Mammary epithelial cell (primary cell): ENCODE measurements at regions of chr18 and their contacts with region 1.

Region 1: DNA sequence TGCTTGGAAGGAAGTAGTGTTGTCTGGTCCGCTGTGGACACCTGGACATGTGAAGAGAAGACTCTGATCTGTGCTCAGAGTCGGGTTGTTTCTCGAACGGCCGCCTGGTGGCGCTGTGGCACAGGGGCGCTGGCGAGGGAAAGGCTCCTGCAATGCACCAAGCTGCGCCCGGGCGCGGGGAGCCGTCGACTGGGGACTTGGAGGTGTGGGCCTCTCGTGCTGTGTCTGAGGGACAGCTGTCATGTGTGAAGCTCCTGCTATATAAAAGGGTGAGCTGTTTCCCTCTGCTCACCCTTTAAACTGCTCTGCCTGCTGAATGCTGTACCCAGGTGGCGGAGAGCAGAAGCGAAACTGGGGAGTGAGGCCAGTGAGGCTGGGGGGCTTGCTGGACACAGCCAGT is 44.0 kb downstream of the GNAL start:
- DNase-seq: peak; percentile 63
- H3K4me3 ChIP-seq: peak overlapping the region in 1 of 3 experiments; percentile 16
- H3K27ac ChIP-seq: no peak overlapping the region
- H3K4me1 ChIP-seq: peaks cover 12% of the 10 kb centered on the region
- H3K27me3 ChIP-seq: no peaks in the 10 kb centered on the region
- CTCF ChIP-seq: peak; percentile 87 to 96

Region 2: GRCh38 chr18:11454021-11454420 is 279.0 kb before region 1 on chr18:
- CTCF ChIA-PET with region 1: no interaction called
- dilution Hi-C with region 1: no loop called
- in situ Hi-C with region 1: no loop called
- intact Hi-C with region 1: no loop called
- DNase-seq: no peak
- H3K4me3 ChIP-seq: no peak overlapping the region
- H3K27ac ChIP-seq: no peak overlapping the region
- H3K4me1 ChIP-seq: no peaks in the 10 kb centered on the region
- H3K27me3 ChIP-seq: no peaks in the 10 kb centered on the region
- CTCF ChIP-seq: no peak

Region 3: DNA sequence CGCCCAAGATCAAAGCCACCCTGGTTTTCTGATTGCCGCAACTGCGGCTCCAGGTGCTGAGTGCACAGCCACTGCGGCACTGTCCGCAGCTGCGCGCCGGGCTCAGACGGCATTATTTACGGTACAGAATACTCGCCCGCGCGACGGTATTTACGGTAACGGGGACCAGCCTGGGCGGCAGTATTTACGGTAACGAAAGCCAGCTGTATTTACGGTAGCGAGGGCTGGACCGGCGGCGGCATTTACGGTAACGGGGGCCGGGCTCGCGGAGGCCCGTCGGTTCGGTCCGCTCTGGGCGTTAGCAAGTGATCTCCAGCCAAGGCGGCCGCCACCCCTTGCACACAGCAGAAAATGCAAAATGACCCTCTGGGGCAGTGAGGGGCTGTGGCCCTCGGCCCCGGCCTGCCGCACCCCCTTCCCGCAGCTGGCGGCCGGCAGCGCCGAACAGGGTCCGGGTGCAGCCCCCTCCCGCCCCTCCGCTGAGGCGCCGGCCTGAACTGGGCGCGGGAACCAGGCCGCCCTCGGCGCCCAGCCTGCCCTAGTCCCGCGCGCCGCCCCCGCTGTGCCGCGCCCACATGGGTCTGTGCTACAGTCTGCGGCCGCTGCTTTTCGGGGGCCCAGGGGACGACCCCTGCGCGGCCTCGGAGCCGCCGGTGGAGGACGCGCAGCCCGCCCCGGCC is 43.9 kb before region 1 on chr18 and contains the start of gene GNAL:
- CTCF ChIA-PET with region 1: no interaction called
- dilution Hi-C with region 1: no loop called
- in situ Hi-C with region 1: no loop called
- intact Hi-C with region 1: loop called (anchors 1 kb)
- DNase-seq: peak; percentile 80
- H3K4me3 ChIP-seq: peak within 1 kb of the TSS; percentile 54 to 90 (median 81)
- H3K27ac ChIP-seq: peak within 1 kb of the TSS; percentile 2
- H3K4me1 ChIP-seq: peaks cover 4% of the 10 kb centered on the region
- H3K27me3 ChIP-seq: no peaks in the 10 kb centered on the region
- CTCF ChIP-seq: no peak
- total RNA-seq, gene GNAL: 35.0 to 40.8 TPM

Region 4: DNA sequence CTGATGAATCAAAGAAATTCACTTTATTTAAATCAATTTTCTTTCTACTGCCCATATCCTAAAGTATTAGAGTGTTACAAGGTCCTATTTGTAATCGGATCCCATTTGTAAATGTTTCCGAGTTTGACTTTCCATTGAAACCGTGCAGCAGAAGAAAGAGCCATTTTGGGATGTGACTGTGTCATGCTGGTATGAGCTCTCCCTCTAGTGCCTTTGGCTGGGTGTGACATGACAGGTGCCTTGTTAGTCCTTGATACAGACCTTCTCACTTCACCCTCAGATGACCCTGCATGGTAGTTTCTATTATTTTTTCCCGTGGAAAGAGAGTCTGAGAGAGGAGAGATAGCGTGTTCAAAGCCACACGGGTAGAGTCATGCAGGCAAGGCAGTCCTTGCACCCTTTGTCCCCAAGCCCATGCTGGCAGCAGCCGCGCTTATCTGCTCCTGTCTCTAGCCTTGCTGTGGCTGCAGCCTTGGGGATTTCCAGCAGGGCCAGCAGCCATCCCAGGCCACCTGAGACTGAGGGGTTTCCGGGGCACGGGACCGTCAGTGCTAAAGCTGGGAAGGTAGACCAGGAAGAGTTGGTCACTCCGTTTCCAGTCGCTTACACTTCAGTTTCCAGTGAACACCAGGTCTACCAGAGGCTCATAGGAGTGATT is 139.6 kb after region 1 on chr18:
- CTCF ChIA-PET with region 1: no interaction called
- dilution Hi-C with region 1: no loop called
- in situ Hi-C with region 1: loop called in 1 of 2 experiments (anchors 10 kb)
- intact Hi-C with region 1: loop called (anchors 1 kb)
- DNase-seq: no peak
- H3K4me3 ChIP-seq: no peak overlapping the region
- H3K27ac ChIP-seq: no peak overlapping the region
- H3K4me1 ChIP-seq: no peaks in the 10 kb centered on the region
- H3K27me3 ChIP-seq: no peaks in the 10 kb centered on the region
- CTCF ChIP-seq: peak; percentile 14 to 58

Region 5: GRCh38 chr18:11937874-11938478 is 204.9 kb after region 1 on chr18:
- CTCF ChIA-PET with region 1: no interaction called
- dilution Hi-C with region 1: no loop called
- in situ Hi-C with region 1: no loop called
- intact Hi-C with region 1: loop called (anchors 5 kb)
- DNase-seq: peak; percentile 47
- H3K4me3 ChIP-seq: no peak overlapping the region
- H3K27ac ChIP-seq: no peak overlapping the region
- H3K4me1 ChIP-seq: no peaks in the 10 kb centered on the region
- H3K27me3 ChIP-seq: no peaks in the 10 kb centered on the region
- CTCF ChIP-seq: peak; percentile 70 to 83

Region 6: DNA sequence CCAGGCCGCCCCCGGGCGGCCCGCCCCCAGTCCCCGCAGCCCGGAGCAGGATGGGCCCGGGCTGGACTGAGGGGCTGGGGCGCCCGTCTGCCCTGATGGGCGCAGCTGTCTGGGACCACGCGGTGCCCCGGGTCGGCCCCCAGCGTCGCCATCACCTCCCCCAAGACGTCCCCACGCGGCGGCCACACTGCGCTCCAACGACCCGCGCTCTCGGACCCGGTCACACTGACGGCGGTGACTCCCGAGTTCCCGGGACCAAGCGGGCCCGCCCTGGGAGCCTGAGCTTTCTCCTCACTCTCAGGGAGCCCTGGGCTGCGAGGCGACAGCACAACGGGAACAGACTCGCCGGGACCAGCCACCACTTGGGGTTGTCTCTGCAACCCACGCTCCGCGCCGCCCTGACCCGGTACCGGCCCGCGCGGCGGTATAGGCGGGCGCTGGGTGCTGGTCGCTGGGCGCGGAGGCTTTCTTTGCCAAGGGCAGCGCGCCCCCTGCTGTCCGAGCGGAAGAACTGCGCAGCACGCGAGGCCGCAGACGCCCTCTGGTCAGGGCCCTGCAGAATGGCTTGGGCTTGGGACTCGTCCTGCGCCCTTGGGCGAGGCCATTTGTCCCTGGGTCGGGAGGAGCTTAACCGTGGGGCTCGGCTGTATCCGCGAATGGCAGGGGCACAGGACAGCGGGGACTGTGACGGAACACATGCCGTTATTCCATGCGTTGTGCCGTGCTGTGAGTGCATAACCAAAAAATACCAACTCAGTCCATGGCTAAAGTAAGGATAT is 305.8 kb after region 1 on chr18:
- CTCF ChIA-PET with region 1: no interaction called
- dilution Hi-C with region 1: no loop called
- in situ Hi-C with region 1: loop called in 1 of 2 experiments (anchors 25 kb)
- intact Hi-C with region 1: loop called (anchors 2 kb)
- DNase-seq: peak; percentile 61
- H3K4me3 ChIP-seq: peak overlapping the region; percentile 33 to 53 (median 41)
- H3K27ac ChIP-seq: peak overlapping the region; percentile 22
- H3K4me1 ChIP-seq: peaks cover 20% of the 10 kb centered on the region
- H3K27me3 ChIP-seq: no peaks in the 10 kb centered on the region
- CTCF ChIP-seq: peak; percentile 73 to 93